ENCODE measurements at regions of chr5 and their contacts with region 1.

Region 1: GRCh38 chr5:67693956-67694809 is 497.6 kb upstream of the CD180 start:
- DNase-seq: peak; percentile 78
- ATAC-seq: peak; percentile 95

Region 2: GRCh38 chr5:67809589-67809988 is 115.4 kb after region 1 on chr5:
- intact Hi-C with region 1: loop called (anchors 10 kb)
- DNase-seq: no peak
- ATAC-seq: no peak

Region 3: DNA sequence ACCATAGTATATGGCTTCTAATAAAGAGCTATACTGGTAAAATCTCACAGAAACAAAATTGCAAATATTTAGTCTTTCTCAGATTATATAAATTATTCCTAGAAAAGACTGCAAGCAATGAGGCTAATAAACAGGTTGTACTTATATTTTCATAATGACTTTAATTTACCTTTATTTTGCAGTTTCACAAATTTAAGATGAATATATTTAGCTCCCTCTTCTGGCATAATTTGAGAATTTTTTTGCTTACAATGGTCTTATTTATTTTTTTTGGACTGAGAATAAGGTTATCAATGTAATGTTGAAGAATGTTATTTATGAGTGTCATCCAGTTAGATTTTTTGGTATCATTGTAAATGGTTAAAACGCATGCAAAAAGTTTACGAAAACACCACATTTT is 578.1 kb after region 1 on chr5:
- intact Hi-C with region 1: loop called (anchors 10 kb)
- DNase-seq: no peak
- ATAC-seq: no peak

Measured in Right ventricle myocardium superior (tissue), 1 donor.